Dendritic cell treated with granulocyte-macrophage colony-stimulating factor and Interleukin-4, amounts not matched to agents 40 ng/mL and 50 ng/mL, for 4 days (primary cell): ENCODE measurements at regions of chr1 and their contacts with region 1.

Region 1: DNA sequence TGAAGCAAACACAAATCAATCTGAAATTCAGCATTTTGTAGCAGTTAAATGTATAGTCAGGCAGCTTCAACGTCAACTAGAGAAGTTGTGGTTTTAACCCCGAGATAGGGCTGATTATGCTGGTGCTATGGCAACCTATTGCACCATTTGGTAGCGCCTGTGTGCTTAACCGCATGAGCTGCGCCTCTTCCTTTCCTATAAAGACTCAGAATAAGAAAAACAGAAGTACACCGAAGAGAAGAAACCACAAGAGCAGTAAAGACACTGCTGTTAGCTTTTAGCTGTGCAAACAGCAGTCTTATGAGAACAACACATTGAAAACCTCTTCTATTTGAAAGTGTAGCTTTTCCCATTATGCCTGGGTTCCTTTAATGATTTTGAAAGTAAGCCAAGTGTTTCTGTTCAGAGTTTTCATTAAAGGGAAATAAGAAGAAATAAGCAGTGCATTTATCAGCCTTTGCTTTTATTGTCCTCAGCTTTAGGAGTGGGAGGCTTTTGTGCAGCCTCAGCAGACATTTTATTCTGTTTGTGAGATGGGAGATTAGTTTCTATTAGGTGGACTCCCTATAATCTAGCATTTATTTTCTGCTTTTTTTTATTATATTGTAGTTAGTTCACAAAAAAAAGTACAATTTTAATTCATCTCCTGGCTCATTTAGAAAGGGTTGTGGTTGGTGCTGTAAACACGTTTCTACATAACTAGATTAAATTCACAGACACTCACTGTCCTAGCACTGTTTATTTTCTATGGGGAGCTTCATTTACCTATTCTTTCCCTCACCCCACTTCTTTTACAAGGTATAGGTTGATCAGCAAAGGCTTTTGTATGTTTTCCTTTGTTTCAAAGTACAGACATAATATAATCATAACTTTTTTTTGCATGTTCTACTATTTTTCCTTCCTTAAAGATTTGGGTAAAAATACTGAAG is 43.3 kb downstream of the PTPRC start:
- H3K4me3 Mint-ChIP-seq: peak overlapping the region; percentile 48
- H3K27ac Mint-ChIP-seq: peak overlapping the region; percentile 91
- H3K4me1 Mint-ChIP-seq: peaks cover 19% of the 10 kb centered on the region
- H3K27me3 Mint-ChIP-seq: no peaks in the 10 kb centered on the region

Region 2: GRCh38 chr1:198157241-198157846 is 524.8 kb before region 1 on chr1:
- intact Hi-C with region 1: loop called (anchors 2 kb)
- H3K4me3 Mint-ChIP-seq: peak overlapping the region; percentile 93
- H3K27ac Mint-ChIP-seq: peak overlapping the region; percentile 93
- H3K4me1 Mint-ChIP-seq: peaks cover 49% of the 10 kb centered on the region
- H3K27me3 Mint-ChIP-seq: no peaks in the 10 kb centered on the region

Region 3: DNA sequence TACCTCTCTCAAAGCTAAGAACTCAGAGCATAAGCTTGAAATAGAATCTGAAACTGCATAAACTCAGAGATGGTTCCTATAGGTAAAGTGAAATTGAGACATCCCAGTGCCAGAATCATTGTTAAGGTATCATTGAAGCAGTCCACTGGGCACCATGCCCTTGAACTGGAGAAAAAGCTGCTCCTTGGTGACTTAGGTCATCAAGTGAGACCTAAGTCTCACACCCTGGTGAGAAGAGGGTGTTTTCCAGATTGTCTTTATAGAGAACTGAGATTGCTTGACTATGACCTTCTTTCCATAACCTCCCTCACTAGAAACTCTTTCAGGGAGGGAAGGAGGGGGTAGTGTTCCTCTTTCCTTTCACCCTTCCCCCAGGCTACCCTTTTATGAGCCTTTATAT is 132.2 kb before region 1 on chr1:
- intact Hi-C with region 1: loop called (anchors 5 kb)
- H3K4me3 Mint-ChIP-seq: no peak overlapping the region
- H3K27ac Mint-ChIP-seq: peak overlapping the region; percentile 82
- H3K4me1 Mint-ChIP-seq: peaks cover 25% of the 10 kb centered on the region
- H3K27me3 Mint-ChIP-seq: no peaks in the 10 kb centered on the region

Region 4: DNA sequence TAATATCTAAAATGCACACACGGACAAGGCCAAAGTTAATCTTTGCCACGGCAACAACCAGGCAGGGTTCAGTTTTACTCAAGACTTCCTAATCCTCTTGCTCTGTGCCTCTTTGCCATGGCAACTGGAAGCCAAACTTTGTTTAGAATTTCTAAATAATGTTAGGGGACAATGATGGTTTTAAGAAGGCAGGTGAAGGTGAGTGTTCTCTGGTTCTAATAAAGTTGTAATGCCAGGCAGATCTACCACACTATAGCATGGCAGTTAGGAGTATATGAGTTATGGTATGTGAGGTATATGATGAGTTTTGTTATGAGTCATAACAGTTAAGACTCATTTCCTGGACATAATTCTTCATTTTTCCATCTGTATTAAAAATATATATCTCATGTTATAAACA is 40.6 kb before region 1 on chr1:
- intact Hi-C with region 1: loop called (anchors 2 kb)
- H3K4me3 Mint-ChIP-seq: peak overlapping the region; percentile 78
- H3K27ac Mint-ChIP-seq: peak overlapping the region; percentile 60
- H3K4me1 Mint-ChIP-seq: peaks cover 35% of the 10 kb centered on the region
- H3K27me3 Mint-ChIP-seq: no peaks in the 10 kb centered on the region

Region 5: GRCh38 chr1:198664068-198664788 is 17.9 kb before region 1 on chr1:
- intact Hi-C with region 1: loop called (anchors 2 kb)
- H3K4me3 Mint-ChIP-seq: peak overlapping the region; percentile 67
- H3K27ac Mint-ChIP-seq: peak overlapping the region; percentile 91
- H3K4me1 Mint-ChIP-seq: peaks cover 63% of the 10 kb centered on the region
- H3K27me3 Mint-ChIP-seq: no peaks in the 10 kb centered on the region

Region 6: GRCh38 chr1:198903203-198903602 is 221.1 kb after region 1 on chr1:
- intact Hi-C with region 1: no loop called
- H3K4me3 Mint-ChIP-seq: no peak overlapping the region
- H3K27ac Mint-ChIP-seq: no peak overlapping the region
- H3K4me1 Mint-ChIP-seq: peaks cover 9% of the 10 kb centered on the region
- H3K27me3 Mint-ChIP-seq: no peaks in the 10 kb centered on the region